Activated CD4-positive, alpha-beta T cell treated with anti-CD3 and anti-CD28 coated beads for 36 hours (primary cell): ENCODE measurements at regions of chr20 and their contacts with region 1.

Region 1: DNA sequence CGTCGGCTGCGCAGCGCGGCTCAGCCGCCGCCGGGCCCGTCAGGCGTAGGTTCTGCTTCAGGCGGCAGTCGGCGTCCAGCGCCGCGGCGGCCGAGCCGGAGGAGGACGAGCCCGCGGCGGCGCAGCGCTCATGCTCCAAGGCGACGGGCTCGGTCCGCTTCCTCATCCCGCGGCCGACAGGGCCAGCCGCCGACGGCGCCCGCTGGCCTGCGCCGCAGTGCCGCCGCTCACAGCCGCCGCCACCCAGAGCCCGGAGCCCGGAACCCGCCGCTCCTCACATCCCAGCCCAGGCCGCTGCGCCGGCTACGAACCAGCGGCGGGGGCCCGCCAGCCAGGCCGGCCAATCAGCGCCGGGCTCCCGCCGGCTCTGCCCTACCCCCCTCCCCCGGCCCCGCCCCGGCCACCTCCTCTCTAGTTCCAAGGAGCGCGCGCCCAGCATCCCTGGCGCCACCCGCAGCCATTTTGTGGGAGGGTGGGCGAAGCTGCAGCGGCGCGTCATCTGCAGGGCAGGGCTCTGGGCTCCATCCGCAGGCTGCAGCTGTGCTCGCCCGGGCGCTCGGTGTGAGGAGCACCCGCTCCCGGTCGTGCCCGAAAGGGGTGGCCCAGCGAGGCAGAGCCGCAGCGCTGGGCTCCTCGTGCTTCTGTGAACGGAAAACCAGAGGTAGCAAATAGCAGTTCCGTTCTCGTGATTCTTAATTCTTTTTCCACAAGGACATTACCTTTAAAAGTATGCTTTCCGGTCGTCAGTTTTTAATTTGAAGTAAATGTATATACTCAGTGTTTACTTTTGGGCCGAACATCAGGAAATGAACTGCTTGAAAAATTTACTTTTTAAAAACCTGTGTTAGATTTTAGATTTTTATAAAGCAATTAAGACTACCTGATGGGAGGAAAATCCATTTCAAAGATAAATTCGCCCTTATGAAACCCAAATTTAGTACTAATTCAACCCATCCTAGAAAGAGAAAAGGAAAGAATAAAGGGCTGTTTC is at the start of gene ABHD12:
- DNase-seq: peak; percentile 98
- ATAC-seq: peak; percentile 97
- H3K4me3 Mint-ChIP-seq: peak within 1 kb of the TSS; percentile 79
- H3K27ac Mint-ChIP-seq: peak within 1 kb of the TSS; percentile 84
- H3K4me1 Mint-ChIP-seq: peaks cover 12% of the 10 kb centered on the region
- H3K27me3 Mint-ChIP-seq: no peaks in the 10 kb centered on the region
- total RNA-seq, gene ABHD12: 17.4 to 18.7 TPM

Region 2: DNA sequence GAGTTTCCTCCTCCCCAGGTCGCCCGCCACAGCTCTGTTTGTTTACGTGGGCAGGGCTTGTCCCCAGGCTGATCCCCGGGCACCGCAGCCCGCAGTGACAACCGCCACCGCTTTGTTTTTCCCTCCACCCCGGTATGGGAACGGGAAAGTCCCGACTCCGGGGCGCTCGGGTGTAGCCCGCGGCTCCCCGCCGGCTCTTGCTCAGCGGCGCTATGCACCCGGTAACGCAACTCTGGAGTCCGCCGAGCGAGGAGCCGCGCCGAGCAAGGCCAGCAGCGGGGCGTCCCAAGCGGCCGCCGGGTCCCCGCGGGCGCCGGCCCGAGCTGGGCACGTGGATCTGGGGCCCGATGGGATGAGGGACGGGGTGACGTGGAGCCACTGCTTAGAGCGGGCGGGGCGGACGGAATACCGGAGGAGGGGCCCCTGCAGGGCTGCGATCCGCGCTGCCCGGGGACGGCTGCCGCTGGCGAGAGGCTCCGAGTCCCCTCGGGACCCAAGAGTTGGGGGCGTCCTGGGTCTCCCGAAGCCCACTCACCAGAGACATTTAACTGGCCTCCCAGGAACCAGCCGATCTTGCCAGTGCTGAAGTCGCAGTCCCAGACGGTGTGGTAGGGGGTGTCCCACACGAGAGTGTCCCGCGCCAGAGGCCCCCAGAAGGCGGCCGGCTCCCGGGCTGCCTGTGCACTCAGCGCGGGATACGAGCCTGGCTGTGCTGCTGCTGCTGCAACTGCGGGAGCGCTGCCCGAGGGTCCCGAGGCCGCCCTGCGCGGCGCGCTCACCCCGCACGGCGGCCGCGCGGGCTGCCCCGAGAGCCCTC is 333.4 kb before region 1 on chr20:
- CTCF ChIA-PET with region 1: no interaction called
- POLR2A ChIA-PET with region 1: no interaction called
- intact Hi-C with region 1: loop called in 1 of 2 experiments (anchors 1 kb)
- DNase-seq: peak; percentile 86
- ATAC-seq: peak; percentile 52
- H3K4me3 Mint-ChIP-seq: peak overlapping the region; percentile 74
- H3K27ac Mint-ChIP-seq: peak overlapping the region; percentile 77
- H3K4me1 Mint-ChIP-seq: peaks cover 53% of the 10 kb centered on the region
- H3K27me3 Mint-ChIP-seq: no peaks in the 10 kb centered on the region

Region 3: GRCh38 chr20:25294459-25295385 is 96.1 kb before region 1 on chr20:
- CTCF ChIA-PET with region 1: interaction called, 3 read pairs
- POLR2A ChIA-PET with region 1: no interaction called
- intact Hi-C with region 1: loop called in 1 of 2 experiments (anchors 2 kb)
- DNase-seq: peak; percentile 78
- ATAC-seq: peak; percentile 91
- H3K4me3 Mint-ChIP-seq: no peak overlapping the region
- H3K27ac Mint-ChIP-seq: no peak overlapping the region
- H3K4me1 Mint-ChIP-seq: no peaks in the 10 kb centered on the region
- H3K27me3 Mint-ChIP-seq: no peaks in the 10 kb centered on the region

Region 4: DNA sequence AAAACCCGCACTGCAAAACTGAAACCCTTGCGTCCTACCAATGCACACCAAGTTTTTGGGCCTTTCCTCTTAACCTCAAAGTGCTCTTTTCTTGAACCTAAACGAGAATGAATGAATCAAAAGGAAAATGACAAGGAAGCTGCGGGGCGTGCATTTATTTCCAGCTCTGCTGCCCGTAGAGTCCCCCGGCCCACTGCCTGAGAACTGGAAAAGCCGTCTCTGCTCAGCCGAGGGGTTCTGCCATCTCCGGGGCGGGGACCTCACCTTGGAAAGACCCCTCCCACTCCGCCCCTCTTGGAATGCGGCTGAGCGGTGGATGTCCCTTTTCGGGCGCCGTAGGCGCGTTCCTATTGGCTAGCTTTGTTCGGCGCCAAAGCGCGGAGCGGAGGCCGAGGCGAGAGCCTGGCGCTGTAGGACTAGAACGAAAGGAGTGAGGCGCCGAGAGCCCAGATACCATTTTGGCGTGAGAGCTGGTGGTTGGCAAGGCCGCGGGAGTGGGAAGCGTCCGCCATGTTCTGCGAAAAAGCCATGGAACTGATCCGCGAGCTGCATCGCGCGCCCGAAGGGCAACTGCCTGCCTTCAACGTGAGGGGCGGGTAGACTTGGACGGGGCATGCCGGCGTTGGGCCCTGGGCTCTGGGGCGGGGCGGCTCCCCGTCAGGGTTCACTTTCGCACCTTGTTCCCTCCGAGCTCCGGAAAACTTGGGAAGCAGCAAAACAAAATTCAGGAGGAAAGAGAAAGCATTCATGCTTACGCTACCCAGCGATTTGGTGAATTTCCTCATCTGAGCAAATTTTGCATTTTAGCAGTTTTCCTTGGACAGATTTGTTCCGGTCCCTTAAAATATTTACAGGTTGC is 16.7 kb after region 1 on chr20 and contains the start of gene GINS1:
- CTCF ChIA-PET with region 1: interaction called, 6 read pairs
- POLR2A ChIA-PET with region 1: interaction called, 4 read pairs
- intact Hi-C with region 1: loop called (anchors 1 kb)
- DNase-seq: peak; percentile 92
- ATAC-seq: peak; percentile 92
- H3K4me3 Mint-ChIP-seq: peak within 1 kb of the TSS; percentile 78
- H3K27ac Mint-ChIP-seq: peak within 1 kb of the TSS; percentile 94
- H3K4me1 Mint-ChIP-seq: peaks cover 16% of the 10 kb centered on the region
- H3K27me3 Mint-ChIP-seq: no peaks in the 10 kb centered on the region
- total RNA-seq, gene GINS1: 24.6 to 32.7 TPM

Region 5: GRCh38 chr20:25696384-25697131 is 305.7 kb after region 1 on chr20 and contains the start of gene ZNF337:
- CTCF ChIA-PET with region 1: no interaction called
- POLR2A ChIA-PET with region 1: no interaction called
- intact Hi-C with region 1: loop called in 1 of 2 experiments (anchors 1 kb)
- DNase-seq: peak; percentile 97
- ATAC-seq: peak; percentile 97
- H3K4me3 Mint-ChIP-seq: peak within 1 kb of the TSS; percentile 83
- H3K27ac Mint-ChIP-seq: peak within 1 kb of the TSS; percentile 84
- H3K4me1 Mint-ChIP-seq: peaks cover 41% of the 10 kb centered on the region
- H3K27me3 Mint-ChIP-seq: no peaks in the 10 kb centered on the region
- total RNA-seq, gene ZNF337: 12.6 TPM